ENCODE measurements at regions of chr15 and their contacts with region 1.

Region 1: GRCh38 chr15:48112242-48112641 is 8.5 kb upstream of the SLC24A5 start:
- DNase-seq: peak; percentile 45 to 53
- H3K4me3 ChIP-seq: no peak overlapping the region
- H3K4me3 Mint-ChIP-seq: no peak overlapping the region
- H3K27ac Mint-ChIP-seq: no peak overlapping the region
- H3K4me1 ChIP-seq: no peaks in the 10 kb centered on the region
- H3K4me1 Mint-ChIP-seq: no peaks in the 10 kb centered on the region
- H3K27me3 ChIP-seq: no peaks in the 10 kb centered on the region
- H3K27me3 Mint-ChIP-seq: peaks cover 22% of the 10 kb centered on the region
- CTCF ChIP-seq: peak; percentile 50 to 81

Region 2: DNA sequence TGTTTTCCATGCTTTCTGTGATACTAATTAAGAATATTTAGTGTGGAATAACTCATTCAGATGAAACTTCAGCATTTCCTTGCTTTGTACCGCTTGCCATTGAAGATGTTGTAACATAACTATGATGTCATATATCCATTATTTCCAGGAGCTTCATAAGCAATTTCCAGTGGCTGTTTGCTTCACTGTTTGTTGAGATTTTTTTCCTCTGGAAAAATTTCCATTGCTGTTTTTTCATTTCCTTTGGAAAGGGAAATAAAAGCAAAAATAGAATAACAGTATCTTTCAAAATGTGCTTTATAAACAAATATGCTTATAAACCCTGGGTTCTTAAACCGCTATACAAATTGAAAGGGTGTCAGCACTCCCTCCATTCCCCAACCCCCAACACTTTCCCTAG is 714.6 kb before region 1 on chr15:
- CTCF ChIA-PET with region 1: no interaction called
- POLR2A ChIA-PET with region 1: no interaction called
- intact Hi-C with region 1: no loop called
- DNase-seq: no peak
- H3K4me3 ChIP-seq: no peak overlapping the region
- H3K4me3 Mint-ChIP-seq: no peak overlapping the region
- H3K27ac Mint-ChIP-seq: no peak overlapping the region
- H3K4me1 ChIP-seq: no peaks in the 10 kb centered on the region
- H3K4me1 Mint-ChIP-seq: no peaks in the 10 kb centered on the region
- H3K27me3 ChIP-seq: no peaks in the 10 kb centered on the region
- H3K27me3 Mint-ChIP-seq: peaks cover 13% of the 10 kb centered on the region
- CTCF ChIP-seq: no peak

Region 3: GRCh38 chr15:48250640-48251076 is 138.4 kb after region 1 on chr15:
- CTCF ChIA-PET with region 1: no interaction called
- POLR2A ChIA-PET with region 1: no interaction called
- intact Hi-C with region 1: loop called (anchors 1 kb)
- DNase-seq: peak in 1 of 2 experiments; percentile 51
- H3K4me3 ChIP-seq: no peak overlapping the region
- H3K4me3 Mint-ChIP-seq: no peak overlapping the region
- H3K27ac Mint-ChIP-seq: no peak overlapping the region
- H3K4me1 ChIP-seq: no peaks in the 10 kb centered on the region
- H3K4me1 Mint-ChIP-seq: no peaks in the 10 kb centered on the region
- H3K27me3 ChIP-seq: no peaks in the 10 kb centered on the region
- H3K27me3 Mint-ChIP-seq: peaks cover 21% of the 10 kb centered on the region
- CTCF ChIP-seq: peak; percentile 50 to 55

Region 4: DNA sequence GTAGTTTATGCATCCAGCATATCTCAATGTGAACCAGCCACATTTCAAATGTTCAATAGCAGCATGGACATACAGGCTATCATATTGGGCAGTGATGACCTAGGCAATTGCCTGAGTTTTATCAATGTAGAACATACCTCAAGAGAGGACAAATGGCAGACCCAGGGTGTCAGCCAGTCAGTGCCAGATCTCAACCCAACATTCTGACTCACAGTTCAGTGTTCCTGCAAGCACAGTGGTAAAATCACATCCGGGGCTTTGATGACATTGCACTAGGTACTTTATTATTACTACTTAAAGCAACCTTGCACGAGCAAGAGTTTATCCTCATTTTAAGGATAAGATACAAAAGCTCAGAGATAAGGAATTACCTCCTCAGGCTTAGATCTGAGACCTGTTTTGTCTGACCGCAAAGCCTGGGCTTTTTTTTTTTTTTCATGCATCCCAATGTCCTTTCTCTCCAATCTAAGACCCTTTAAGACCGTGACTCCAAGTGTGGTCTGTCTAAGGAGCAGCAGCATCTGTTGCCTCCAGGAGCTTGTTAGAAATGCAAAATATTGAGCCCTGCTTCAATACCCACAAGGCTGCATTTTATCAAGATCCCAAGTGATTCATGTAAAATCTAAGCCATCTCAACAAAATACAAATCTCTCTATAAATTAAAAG is 153.9 kb after region 1 on chr15:
- CTCF ChIA-PET with region 1: no interaction called
- POLR2A ChIA-PET with region 1: no interaction called
- intact Hi-C with region 1: no loop called
- DNase-seq: no peak
- H3K4me3 ChIP-seq: no peak overlapping the region
- H3K4me3 Mint-ChIP-seq: no peak overlapping the region
- H3K27ac Mint-ChIP-seq: no peak overlapping the region
- H3K4me1 ChIP-seq: no peaks in the 10 kb centered on the region
- H3K4me1 Mint-ChIP-seq: no peaks in the 10 kb centered on the region
- H3K27me3 ChIP-seq: no peaks in the 10 kb centered on the region
- H3K27me3 Mint-ChIP-seq: peaks cover 18% of the 10 kb centered on the region
- CTCF ChIP-seq: no peak

Region 5: DNA sequence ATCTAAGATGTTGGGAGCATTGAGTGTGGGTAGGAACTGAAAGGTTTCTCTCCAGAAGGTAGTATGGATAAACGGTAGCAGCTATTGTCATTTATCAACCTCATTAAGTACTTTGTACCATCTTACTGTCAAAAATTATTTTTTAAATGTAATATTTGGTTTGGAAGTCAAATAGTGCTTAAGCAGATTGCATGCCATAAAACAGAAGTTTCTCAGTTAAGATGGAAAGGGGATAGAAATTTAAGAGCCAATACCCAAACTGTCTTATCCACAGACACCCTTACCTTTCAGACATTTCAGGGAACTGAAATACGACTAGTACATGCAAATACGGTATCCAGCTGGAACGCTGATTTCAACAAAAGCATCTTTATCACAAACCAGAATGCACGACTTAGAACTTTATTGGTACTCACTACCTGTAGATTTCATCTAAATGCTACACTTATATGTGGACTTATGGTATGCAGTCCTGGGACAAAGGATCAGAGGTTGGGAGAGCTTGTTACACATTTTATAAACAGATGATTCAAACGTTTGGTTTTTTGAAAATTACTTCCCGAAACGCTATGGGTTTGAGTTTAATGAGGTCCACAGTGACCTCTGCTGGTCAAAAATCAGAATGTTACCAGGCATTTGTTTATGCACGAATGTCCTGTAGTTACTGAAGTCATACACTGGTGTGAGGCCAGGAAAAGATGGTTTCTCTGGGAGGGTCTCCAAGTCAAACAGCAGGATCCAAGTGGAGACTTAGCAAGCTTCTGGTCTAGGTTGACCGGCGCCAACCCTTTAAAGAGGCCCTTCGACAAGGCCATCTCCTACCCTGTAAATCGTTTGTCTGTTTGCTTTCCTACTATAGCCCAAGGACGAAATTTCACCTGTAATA is 173.3 kb after region 1 on chr15:
- CTCF ChIA-PET with region 1: no interaction called
- POLR2A ChIA-PET with region 1: no interaction called
- intact Hi-C with region 1: loop called (anchors 1 kb)
- DNase-seq: peak; percentile 46 to 63
- H3K4me3 ChIP-seq: no peak overlapping the region
- H3K4me3 Mint-ChIP-seq: no peak overlapping the region
- H3K27ac Mint-ChIP-seq: no peak overlapping the region
- H3K4me1 ChIP-seq: no peaks in the 10 kb centered on the region
- H3K4me1 Mint-ChIP-seq: peaks cover 7% of the 10 kb centered on the region
- H3K27me3 ChIP-seq: no peaks in the 10 kb centered on the region
- H3K27me3 Mint-ChIP-seq: peaks cover 13% of the 10 kb centered on the region
- CTCF ChIP-seq: peak; percentile 48 to 55